B cell (primary cell): ENCODE measurements at regions of chr1 and their contacts with region 1.

Region 1: GRCh38 chr1:221708987-221709386 is 32.9 kb downstream of the DUSP10 start:
- DNase-seq: peak; percentile 84
- ATAC-seq: peak; percentile 63
- H3K4me3 ChIP-seq: no peak overlapping the region
- H3K4me3 Mint-ChIP-seq: peak overlapping the region; percentile 65
- H3K27ac ChIP-seq: no peak overlapping the region
- H3K27ac Mint-ChIP-seq: peak overlapping the region; percentile 83
- H3K4me1 ChIP-seq: peaks cover 34 to 37% of the 10 kb centered on the region in 2 donors
- H3K4me1 Mint-ChIP-seq: peaks cover 57% of the 10 kb centered on the region
- H3K27me3 ChIP-seq: no peaks in the 10 kb centered on the region
- H3K27me3 Mint-ChIP-seq: no peaks in the 10 kb centered on the region
- CTCF ChIP-seq: no peak

Region 2: DNA sequence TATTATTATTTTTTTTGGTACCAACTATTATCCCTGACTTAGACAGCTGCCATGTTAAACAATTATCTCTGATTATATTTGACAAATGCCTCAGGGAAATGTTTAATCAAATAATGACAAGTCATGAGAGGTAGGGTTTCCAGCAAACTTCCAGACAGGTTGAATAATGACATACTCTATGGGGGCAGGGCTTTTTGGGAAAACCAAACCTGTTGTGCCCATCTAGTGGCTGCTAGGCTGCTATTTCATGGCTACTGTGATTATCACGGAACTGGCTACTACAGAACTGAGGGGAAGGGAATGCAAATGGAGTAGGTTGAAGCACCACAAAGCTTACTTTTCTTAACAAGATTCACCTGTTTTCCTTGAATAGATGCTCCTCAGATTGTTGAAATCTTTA is 44.7 kb before region 1 on chr1:
- CTCF ChIA-PET with region 1: no interaction called
- POLR2A ChIA-PET with region 1: no interaction called
- intact Hi-C with region 1: loop called (anchors 5 kb)
- DNase-seq: no peak
- ATAC-seq: no peak
- H3K4me3 ChIP-seq: no peak overlapping the region
- H3K4me3 Mint-ChIP-seq: no peak overlapping the region
- H3K27ac ChIP-seq: no peak overlapping the region
- H3K27ac Mint-ChIP-seq: no peak overlapping the region
- H3K4me1 ChIP-seq: no peaks in the 10 kb centered on the region
- H3K4me1 Mint-ChIP-seq: no peaks in the 10 kb centered on the region
- H3K27me3 ChIP-seq: no peaks in the 10 kb centered on the region
- H3K27me3 Mint-ChIP-seq: peaks cover 6% of the 10 kb centered on the region
- CTCF ChIP-seq: no peak

Region 3: DNA sequence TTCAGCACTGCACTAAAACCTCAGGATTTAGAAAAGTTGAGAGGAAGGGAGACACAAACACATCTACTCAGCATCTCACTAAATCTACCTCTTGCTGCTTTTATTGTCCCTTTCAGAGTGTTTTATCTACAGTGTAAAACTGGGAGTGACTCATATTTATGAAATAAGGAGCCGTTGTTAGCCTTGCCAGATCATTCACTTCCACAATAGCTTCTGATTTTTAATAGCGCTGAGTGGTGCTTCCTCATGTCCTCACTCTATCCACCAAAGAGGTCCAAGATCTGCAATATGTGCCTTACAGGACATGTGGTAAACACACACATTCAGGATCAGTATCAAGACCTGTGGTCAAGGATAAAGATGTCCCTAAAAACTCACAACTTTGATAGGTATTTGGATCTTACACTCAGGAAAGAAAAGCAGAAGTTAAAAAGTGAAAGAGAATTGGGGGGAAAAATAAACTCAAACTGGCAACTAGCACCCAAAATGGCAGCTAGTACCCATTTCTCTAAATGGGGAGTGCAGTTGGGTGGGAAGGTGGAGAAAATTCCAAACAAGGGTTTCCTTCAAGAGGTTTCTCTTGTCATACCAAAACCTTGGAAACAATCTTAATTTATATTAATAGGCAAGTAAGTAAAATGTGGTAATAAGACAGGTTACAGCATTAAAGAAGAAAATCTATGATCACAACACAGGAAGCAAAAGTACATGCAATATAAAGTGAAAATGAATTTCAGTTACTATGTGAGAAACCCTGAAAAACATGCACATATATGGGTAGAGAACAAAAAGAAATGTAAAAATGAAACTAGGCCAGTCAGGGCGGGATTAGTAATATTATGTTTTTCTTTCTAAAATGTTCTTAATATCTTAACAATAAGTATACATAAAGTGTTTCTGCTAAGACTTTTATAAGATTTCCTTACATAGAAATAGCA is 17.0 kb after region 1 on chr1:
- CTCF ChIA-PET with region 1: no interaction called
- POLR2A ChIA-PET with region 1: interaction called, 4 read pairs
- intact Hi-C with region 1: loop called (anchors 2 kb)
- DNase-seq: peak; percentile 53
- ATAC-seq: peak; percentile 33
- H3K4me3 ChIP-seq: peak overlapping the region in 2 of 5 experiments; percentile 3 to 11
- H3K4me3 Mint-ChIP-seq: peak overlapping the region; percentile 62
- H3K27ac ChIP-seq: no peak overlapping the region
- H3K27ac Mint-ChIP-seq: peak overlapping the region; percentile 39
- H3K4me1 ChIP-seq: peaks cover 26 to 31% of the 10 kb centered on the region in 2 donors
- H3K4me1 Mint-ChIP-seq: peaks cover 64% of the 10 kb centered on the region
- H3K27me3 ChIP-seq: no peaks in the 10 kb centered on the region
- H3K27me3 Mint-ChIP-seq: no peaks in the 10 kb centered on the region
- CTCF ChIP-seq: no peak

Region 4: DNA sequence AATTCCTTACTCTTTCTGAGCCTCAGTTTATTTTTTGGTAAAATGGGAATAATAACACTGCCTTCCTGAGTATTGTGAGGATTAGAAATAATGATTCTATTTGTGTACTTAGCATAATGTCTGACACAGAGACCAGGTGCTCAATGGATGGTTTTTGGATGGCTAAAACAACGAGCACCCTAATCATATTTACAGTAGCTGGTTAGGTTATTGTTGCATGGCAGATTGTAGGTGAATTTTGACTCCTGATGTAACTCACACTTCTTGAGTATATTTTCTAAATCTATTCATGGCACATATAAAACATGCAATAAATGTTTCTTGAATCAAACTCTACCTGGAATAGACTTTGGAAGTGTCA is 44.8 kb after region 1 on chr1:
- CTCF ChIA-PET with region 1: no interaction called
- POLR2A ChIA-PET with region 1: no interaction called
- intact Hi-C with region 1: loop called (anchors 1 kb)
- DNase-seq: no peak
- ATAC-seq: no peak
- H3K4me3 ChIP-seq: peak overlapping the region in 1 of 5 experiments; percentile 43
- H3K4me3 Mint-ChIP-seq: peak overlapping the region; percentile 82
- H3K27ac ChIP-seq: no peak overlapping the region
- H3K27ac Mint-ChIP-seq: peak overlapping the region; percentile 85
- H3K4me1 ChIP-seq: peaks cover 15 to 22% of the 10 kb centered on the region in 2 donors
- H3K4me1 Mint-ChIP-seq: peaks cover 36% of the 10 kb centered on the region
- H3K27me3 ChIP-seq: no peaks in the 10 kb centered on the region
- H3K27me3 Mint-ChIP-seq: no peaks in the 10 kb centered on the region
- CTCF ChIP-seq: no peak

Region 5: DNA sequence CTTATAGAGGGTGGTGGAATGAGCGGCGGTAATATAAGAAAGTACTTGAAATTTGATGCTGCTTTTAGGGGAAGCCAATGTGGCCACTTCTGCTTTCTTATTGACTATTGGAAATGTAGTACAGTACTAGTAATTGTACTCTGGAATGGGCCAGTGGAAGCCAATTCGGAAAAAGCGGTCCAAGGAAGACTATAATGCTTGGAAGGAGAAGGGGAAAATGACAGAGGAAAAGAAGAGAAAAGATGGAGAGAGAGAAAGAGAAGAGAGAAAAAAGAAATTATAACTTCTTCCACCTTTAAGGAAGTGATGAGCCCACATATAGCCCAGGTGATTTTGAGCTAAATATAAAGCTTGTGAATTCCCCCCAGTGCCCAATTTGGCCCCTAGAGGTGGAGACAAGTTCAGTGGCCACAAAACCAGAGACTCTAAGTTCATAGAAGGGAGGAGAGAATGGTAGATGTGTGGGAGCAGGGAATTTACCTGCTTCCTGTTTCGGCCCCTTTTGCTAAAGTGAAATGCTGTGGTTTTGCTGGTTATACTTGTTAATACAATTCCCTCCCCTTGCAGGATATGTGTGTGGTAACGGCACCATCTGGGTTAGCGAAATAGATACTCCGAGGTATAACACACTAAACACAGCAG is 68.6 kb after region 1 on chr1:
- CTCF ChIA-PET with region 1: no interaction called
- POLR2A ChIA-PET with region 1: interaction called, 6 read pairs
- intact Hi-C with region 1: loop called (anchors 1 kb)
- DNase-seq: peak; percentile 91
- ATAC-seq: peak; percentile 62
- H3K4me3 ChIP-seq: peak overlapping the region in 4 of 5 experiments; percentile 3 to 49 (median 26)
- H3K4me3 Mint-ChIP-seq: peak overlapping the region; percentile 79
- H3K27ac ChIP-seq: peak overlapping the region; percentile 80 to 88
- H3K27ac Mint-ChIP-seq: peak overlapping the region; percentile 91
- H3K4me1 ChIP-seq: peaks cover 54 to 64% of the 10 kb centered on the region in 2 donors
- H3K4me1 Mint-ChIP-seq: peaks cover 65% of the 10 kb centered on the region
- H3K27me3 ChIP-seq: no peaks in the 10 kb centered on the region
- H3K27me3 Mint-ChIP-seq: no peaks in the 10 kb centered on the region
- CTCF ChIP-seq: no peak

Region 6: DNA sequence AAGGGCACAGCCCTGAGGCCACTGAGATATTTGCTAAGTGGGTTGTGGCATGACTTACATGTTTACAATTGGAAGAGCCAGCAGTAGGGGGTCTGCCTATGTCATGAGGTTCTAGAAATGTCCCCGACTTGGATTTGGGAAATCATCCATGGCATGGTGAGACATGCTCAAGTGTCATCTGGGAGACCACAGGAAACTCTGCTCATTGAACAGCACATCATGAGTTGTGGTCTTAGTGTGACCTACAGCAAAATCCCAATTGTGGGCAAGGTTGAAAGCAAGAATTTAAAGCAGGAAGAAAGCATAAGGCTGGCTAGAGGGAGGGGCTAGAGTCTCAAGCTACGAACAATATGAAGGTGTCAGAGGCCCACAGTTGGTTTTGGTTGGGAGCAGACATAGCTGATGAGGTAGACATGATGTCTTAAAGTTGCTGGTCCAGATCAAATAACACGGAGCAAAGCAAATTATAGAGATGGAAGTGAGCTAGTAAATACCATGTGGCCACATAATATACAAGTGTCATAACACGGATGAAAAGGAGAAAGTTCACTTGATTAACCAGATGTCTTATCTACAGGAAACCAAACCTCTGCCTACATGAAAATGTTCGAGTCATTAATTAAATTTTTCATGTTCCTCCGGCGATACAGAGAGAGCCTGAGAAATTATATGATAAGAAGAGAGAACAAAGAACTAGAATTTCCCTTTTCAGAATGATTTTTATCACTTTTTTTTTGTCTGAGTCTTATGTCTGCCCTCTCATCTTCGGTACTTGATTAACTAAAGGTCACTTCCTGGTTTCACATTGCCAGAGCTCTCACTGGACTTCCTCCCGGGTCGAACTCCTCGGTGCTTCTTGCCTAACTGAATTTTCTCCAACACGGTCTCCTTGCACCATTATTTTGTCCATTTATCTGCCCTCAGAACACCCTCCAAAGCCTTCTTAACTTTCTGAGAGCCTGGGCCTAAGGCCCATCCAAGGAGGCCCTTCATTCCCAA is 100.3 kb after region 1 on chr1:
- CTCF ChIA-PET with region 1: no interaction called
- POLR2A ChIA-PET with region 1: interaction called, 10 read pairs
- intact Hi-C with region 1: no loop called
- DNase-seq: peak; percentile 45
- ATAC-seq: peak; percentile 74
- H3K4me3 ChIP-seq: peak overlapping the region in 1 of 5 experiments; percentile 33
- H3K4me3 Mint-ChIP-seq: peak overlapping the region; percentile 38
- H3K27ac ChIP-seq: peak overlapping the region in 1 of 2 donors; percentile 2
- H3K27ac Mint-ChIP-seq: peak overlapping the region; percentile 81
- H3K4me1 ChIP-seq: peaks cover 43 to 48% of the 10 kb centered on the region in 2 donors
- H3K4me1 Mint-ChIP-seq: peaks cover 66% of the 10 kb centered on the region
- H3K27me3 ChIP-seq: no peaks in the 10 kb centered on the region
- H3K27me3 Mint-ChIP-seq: no peaks in the 10 kb centered on the region
- CTCF ChIP-seq: no peak

Region 7: GRCh38 chr1:221923929-221924598 is 215.1 kb after region 1 on chr1:
- CTCF ChIA-PET with region 1: no interaction called
- POLR2A ChIA-PET with region 1: no interaction called
- intact Hi-C with region 1: no loop called
- DNase-seq: no peak
- ATAC-seq: no peak
- H3K4me3 ChIP-seq: no peak overlapping the region
- H3K4me3 Mint-ChIP-seq: no peak overlapping the region
- H3K27ac ChIP-seq: no peak overlapping the region
- H3K27ac Mint-ChIP-seq: no peak overlapping the region
- H3K4me1 ChIP-seq: no peaks in the 10 kb centered on the region
- H3K4me1 Mint-ChIP-seq: no peaks in the 10 kb centered on the region
- H3K27me3 ChIP-seq: no peaks in the 10 kb centered on the region
- H3K27me3 Mint-ChIP-seq: no peaks in the 10 kb centered on the region
- CTCF ChIP-seq: no peak

Region 8: DNA sequence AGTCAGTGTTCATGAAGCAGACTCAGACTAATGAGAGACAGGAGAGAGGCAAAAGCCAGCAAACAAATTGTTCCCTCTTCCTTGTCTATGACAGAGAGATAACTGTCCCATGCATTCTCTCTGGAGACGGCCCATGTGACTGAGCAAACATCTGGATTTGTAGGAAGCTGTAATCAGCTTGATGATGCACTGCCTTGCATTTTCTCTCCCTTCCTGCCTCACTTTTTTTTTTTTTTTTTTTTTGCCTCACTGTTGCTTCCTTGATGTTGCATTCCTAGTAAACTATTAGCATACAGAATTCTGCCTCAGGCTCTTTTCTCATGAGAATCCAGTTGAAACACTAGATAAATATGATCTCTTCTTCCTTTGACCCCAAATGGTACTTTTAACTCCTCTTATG is 704.4 kb after region 1 on chr1:
- CTCF ChIA-PET with region 1: no interaction called
- POLR2A ChIA-PET with region 1: no interaction called
- intact Hi-C with region 1: no loop called
- DNase-seq: no peak
- ATAC-seq: no peak
- H3K4me3 ChIP-seq: no peak overlapping the region
- H3K4me3 Mint-ChIP-seq: no peak overlapping the region
- H3K27ac ChIP-seq: no peak overlapping the region
- H3K27ac Mint-ChIP-seq: no peak overlapping the region
- H3K4me1 ChIP-seq: no peaks in the 10 kb centered on the region
- H3K4me1 Mint-ChIP-seq: no peaks in the 10 kb centered on the region
- H3K27me3 ChIP-seq: no peaks in the 10 kb centered on the region
- H3K27me3 Mint-ChIP-seq: peaks cover 5% of the 10 kb centered on the region
- CTCF ChIP-seq: no peak